ENCODE measurements at regions of chr10 and their contacts with region 1.

Region 1: GRCh38 chr10:117496616-117497028 is 45.9 kb upstream of the EMX2 start:
- DNase-seq: peak; percentile 77
- ATAC-seq: peak; percentile 89 to 95

Region 2: DNA sequence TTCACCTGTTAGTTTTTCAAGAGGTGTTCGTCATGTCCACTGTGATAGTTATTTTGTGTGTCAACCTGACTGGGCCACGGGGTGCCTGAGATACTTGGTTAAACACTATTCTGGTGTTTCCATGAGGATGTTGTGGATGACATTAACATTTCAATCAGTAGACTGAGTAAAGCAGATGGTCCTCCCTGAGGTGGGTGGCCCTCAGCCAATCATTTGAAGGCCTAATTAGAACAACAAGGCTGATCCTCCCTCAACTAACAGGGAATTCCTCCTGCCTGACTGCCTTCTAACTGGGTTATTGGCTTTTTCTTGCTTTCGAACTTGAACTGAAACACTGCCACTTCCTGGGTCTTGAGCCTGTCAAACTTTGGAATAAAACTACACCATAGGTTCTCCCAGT is 571.6 kb before region 1 on chr10:
- intact Hi-C with region 1: no loop called
- DNase-seq: no peak
- ATAC-seq: no peak

Region 3: DNA sequence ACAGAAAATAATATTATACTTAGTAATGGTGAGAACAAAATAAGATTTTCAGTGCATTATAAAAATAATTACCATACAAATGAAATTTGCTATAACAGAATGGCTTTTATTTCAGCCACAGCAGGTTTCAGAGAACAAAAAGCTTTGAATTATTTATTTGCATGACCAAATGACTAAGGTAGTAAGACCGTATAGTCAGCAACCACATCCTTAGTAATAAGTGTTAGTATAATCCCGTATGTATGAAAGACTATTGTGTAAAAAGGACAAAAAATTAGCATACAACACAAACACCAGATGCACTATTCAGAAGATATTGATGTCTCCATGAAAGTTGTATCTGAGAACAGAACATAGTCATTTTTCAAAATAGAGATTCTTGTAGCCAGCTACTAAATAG is 133.6 kb before region 1 on chr10:
- intact Hi-C with region 1: no loop called
- DNase-seq: no peak
- ATAC-seq: no peak

Region 4: GRCh38 chr10:118241229-118242137 is 744.9 kb after region 1 on chr10:
- intact Hi-C with region 1: loop called (anchors 1 to 5 kb)
- DNase-seq: peak; percentile 77
- ATAC-seq: peak; percentile 73

Region 5: DNA sequence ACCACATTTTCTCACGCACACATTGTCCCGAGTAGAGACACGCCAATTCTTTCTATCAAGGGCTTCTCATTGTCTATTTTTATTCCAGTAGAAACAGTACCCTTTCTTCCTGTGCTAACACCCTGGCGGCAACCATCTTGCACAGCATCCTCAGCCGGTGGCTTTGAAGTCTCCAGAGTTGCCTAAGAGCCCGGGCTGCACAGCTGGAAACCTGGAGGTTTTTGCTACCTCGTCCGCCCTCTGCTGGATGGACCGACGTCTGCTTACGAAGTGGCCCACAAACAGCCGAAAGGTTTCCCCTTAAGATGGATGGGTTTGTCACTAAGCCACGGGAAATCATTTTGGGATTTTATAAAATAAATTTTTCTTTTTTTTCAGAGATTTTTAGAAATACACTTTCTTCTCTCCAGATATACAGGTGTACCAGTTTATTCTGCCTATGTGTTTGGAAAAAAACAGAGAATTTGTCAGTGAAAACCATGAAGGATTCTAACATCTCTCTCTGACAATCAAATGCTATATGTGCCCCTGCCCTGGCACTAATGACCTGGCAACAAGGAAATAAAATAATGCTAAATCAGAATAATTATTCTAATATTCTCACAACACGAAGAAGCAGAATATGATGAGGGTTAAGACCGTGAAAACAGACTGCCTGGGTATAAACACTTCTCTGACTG is 927.3 kb after region 1 on chr10:
- intact Hi-C with region 1: loop called in 1 of 2 experiments (anchors 5 kb)
- DNase-seq: peak; percentile 89
- ATAC-seq: peak; percentile 77 to 94

Region 6: GRCh38 chr10:118459726-118460193 is 963.1 kb after region 1 on chr10:
- intact Hi-C with region 1: loop called in 1 of 2 experiments (anchors 2 kb)
- DNase-seq: peak; percentile 29
- ATAC-seq: peak; percentile 55 to 82

Region 7: GRCh38 chr10:118543714-118544400 is 1047.2 kb after region 1 on chr10:
- intact Hi-C with region 1: loop called in 1 of 2 experiments (anchors 10 kb)
- DNase-seq: peak; percentile 35
- ATAC-seq: peak in 1 of 2 donors; percentile 60